ENCODE measurements at regions of chr11 and their contacts with region 1.

Region 1: GRCh38 chr11:61891331-61892084 is at the start of gene FADS3:
- DNase-seq: peak; percentile 80 to 96
- H3K4me3 ChIP-seq: peak within 1 kb of the TSS; percentile 99
- H3K27ac ChIP-seq: peak within 1 kb of the TSS; percentile 90 to 98
- H3K4me1 ChIP-seq: peaks cover 22 to 30% of the 10 kb centered on the region in 2 donors
- H3K27me3 ChIP-seq: no peaks in the 10 kb centered on the region
- CTCF ChIP-seq: no peak
- total RNA-seq, gene FADS3: 191 TPM

Region 2: DNA sequence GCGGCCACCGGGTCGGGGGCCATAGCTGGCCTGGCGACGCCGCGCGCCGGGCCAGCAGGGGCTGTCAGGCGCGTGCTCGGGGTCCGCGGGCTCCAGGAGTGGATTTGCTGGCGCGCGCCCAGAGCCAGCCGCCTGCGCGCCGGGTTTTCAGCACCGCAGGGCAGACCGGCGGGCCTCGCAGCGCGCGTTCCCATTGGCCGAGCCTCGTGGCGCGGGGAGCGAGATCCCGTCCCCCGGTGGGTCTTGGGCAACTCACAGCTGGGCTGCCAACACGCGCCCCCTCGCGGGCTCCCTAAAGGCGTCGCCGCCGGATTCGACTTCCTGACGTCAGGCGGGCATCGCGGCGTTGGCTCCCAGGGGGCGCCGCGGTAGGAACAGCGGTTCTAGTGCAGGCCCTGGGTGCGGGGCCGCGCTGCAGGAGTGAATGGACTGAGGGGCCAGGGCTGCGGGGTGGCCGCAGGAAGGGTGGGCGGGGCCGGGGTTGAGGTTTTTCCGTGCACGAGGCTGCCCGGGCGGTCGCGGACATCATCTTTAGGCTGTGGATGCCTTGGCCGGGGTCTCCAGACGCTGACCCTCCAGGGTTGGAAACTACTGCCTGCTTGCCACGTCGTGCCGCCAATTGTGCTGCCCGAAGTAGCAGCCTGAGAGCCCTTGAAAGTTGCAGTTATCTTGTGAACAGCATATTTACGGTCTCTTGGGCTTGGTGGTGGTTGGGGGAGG is 74.6 kb before region 1 on chr11 and contains the start of gene FADS1:
- intact Hi-C with region 1: loop called (anchors 1 kb)
- DNase-seq: peak; percentile 78 to 98
- H3K4me3 ChIP-seq: peak within 1 kb of the TSS; percentile 85 to 86
- H3K27ac ChIP-seq: peak within 1 kb of the TSS; percentile 99
- H3K4me1 ChIP-seq: peaks cover 0 to 9% of the 10 kb centered on the region in 2 donors
- H3K27me3 ChIP-seq: no peaks in the 10 kb centered on the region
- CTCF ChIP-seq: peak; percentile 55 to 74 (median 58)
- total RNA-seq, gene FADS1: 47.1 TPM

Region 3: DNA sequence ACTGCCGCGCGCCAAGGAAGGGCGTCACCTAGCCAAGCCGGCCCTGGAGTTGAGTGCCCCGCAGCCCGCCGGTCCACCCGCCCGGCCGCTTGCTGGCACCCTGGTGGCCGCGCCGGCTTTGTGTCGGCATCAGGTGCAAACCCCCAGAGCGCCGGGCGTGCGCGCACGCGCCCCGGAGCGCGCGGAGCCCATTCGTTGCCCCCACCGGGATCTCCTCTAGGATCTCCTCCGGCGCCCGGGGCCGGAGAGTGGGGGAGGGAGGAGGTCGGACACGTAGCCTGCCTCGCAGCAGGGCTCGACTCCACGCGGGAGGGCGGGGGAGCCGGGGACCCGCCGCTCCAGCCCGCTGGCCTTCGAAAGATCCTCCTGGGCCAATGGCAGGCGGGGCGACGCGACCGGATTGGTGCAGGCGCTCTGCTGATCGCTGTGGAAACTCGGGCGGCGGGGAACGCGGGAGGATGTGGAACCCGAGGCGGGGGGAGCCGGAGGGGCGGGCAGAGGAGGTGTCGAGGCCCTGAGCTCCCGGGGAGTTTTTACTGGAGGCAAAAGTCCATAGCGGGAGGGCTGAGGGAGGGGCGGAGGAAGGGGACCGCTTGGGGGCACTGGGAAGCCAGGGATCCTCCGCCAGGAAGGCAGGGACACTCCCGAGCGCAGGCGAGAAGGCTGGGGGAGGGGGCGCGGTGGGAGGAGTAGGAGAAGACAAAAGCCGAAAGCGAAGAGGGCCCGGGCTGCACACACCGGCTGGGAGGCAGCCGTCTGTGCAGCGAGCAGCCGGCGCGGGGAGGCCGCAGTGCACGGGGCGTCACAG is 63.7 kb before region 1 on chr11 and contains the start of gene FADS2:
- intact Hi-C with region 1: loop called (anchors 1 kb)
- DNase-seq: peak; percentile 75 to 96
- H3K4me3 ChIP-seq: peak within 1 kb of the TSS; percentile 74 to 78
- H3K27ac ChIP-seq: peak within 1 kb of the TSS; percentile 90 to 92
- H3K4me1 ChIP-seq: peaks cover 2 to 39% of the 10 kb centered on the region in 2 donors
- H3K27me3 ChIP-seq: no peaks in the 10 kb centered on the region
- CTCF ChIP-seq: peak in 1 of 3 experiments; percentile 17
- total RNA-seq, gene FADS2: 37.6 TPM

Region 4: GRCh38 chr11:61834278-61835048 is 57.0 kb before region 1 on chr11:
- intact Hi-C with region 1: loop called (anchors 1 kb)
- DNase-seq: peak in 1 of 2 donors; percentile 84
- H3K4me3 ChIP-seq: no peak overlapping the region
- H3K27ac ChIP-seq: peak overlapping the region; percentile 90 to 92
- H3K4me1 ChIP-seq: peaks cover under 1 to 56% of the 10 kb centered on the region in 2 donors
- H3K27me3 ChIP-seq: no peaks in the 10 kb centered on the region
- CTCF ChIP-seq: no peak

Measured in ascending aorta (tissue), 2 donors.